CD8-positive, alpha-beta T cell (primary cell): ENCODE measurements at regions of chr18 and their contacts with region 1.

Region 1: DNA sequence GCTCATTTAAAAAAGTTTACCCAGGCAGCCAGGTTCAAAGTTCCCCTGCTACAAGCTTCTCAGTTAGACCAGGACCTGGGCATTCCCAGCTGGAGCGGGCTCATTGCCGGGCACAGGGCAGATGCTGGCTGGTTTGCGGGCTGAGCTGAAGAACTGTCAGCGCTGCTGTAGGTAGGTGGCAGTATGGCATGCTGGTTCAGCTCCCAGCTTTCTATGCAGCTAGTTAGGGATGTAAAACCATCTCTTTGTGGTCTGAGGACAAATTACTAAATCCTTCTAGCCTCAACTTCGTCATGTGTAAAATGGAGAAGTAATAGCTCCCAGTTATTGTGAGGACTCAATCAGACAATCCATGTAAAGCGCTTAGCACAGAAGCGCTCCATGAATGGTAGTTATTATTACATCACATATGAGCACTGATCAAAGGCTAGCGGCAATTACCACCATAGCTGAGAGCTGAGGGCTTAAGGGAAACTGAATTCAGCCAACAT is 2.4 kb upstream of the LDLRAD4 start:
- DNase-seq: peak in 8 of 9 experiments; percentile 24 to 76 (median 54)
- ATAC-seq: peak; percentile 47
- H3K4me3 ChIP-seq: peak overlapping the region in 1 of 2 experiments; percentile 39
- H3K4me3 Mint-ChIP-seq: peak overlapping the region; percentile 96
- H3K27ac ChIP-seq: no peak overlapping the region
- H3K27ac Mint-ChIP-seq: peak overlapping the region; percentile 93
- H3K4me1 ChIP-seq: peaks cover 26% of the 10 kb centered on the region
- H3K4me1 Mint-ChIP-seq: peaks cover 31% of the 10 kb centered on the region
- H3K27me3 ChIP-seq: peaks cover 0 to 5% of the 10 kb centered on the region in 2 experiments
- H3K27me3 Mint-ChIP-seq: peaks cover 20% of the 10 kb centered on the region
- CTCF ChIP-seq: peak; percentile 61

Region 2: DNA sequence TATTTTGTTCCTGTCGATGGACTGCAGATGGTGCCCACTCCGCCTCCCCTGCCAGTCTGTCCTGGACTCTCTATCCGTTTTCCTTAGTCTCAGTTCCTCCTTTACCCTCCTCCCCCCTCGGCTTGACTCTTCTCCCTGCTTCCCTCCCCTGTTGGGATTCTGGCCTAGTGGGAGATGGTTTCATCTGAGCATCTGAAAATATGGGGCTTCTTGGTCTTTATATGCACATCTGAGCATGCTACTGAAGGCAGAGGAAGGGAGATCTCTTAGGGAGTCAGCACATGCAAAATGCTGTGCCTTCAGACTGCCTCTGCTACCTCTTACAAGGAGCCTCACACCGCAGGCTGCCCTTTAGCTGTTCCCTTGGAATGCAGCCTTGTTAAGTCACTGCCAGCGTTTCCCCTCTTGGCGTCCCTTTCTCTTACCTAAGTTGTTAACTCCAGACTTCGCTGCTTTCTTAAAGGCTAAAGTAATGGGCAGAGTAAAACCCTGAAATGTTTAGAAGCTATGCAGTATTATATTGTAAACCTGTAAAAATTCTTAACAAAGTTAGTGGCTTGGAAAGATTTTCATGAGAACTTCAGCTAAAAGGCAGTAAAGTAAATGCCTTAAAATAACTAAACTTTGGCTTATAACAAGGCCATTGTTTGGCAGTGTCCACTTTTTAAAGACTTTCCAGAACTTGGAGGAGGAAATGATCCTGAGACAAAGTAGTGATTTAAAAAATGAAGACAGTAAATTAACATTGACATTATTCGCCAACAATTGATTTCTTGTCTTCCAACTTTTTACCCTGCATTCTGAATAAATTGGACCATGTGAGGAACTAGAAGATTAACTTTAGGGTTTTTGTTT is 52.2 kb after region 1 on chr18:
- CTCF ChIA-PET with region 1: interaction called, 3 read pairs
- POLR2A ChIA-PET with region 1: interaction called, 6 read pairs
- intact Hi-C with region 1: loop called in 1 of 2 experiments (anchors 5 kb)
- DNase-seq: peak in 1 of 9 experiments; percentile 32
- ATAC-seq: no peak
- H3K4me3 ChIP-seq: no peak overlapping the region
- H3K4me3 Mint-ChIP-seq: no peak overlapping the region
- H3K27ac ChIP-seq: no peak overlapping the region
- H3K27ac Mint-ChIP-seq: peak overlapping the region; percentile 64
- H3K4me1 ChIP-seq: peaks cover 43% of the 10 kb centered on the region
- H3K4me1 Mint-ChIP-seq: peaks cover 65% of the 10 kb centered on the region
- H3K27me3 ChIP-seq: no peaks in the 10 kb centered on the region
- H3K27me3 Mint-ChIP-seq: no peaks in the 10 kb centered on the region
- CTCF ChIP-seq: no peak

Region 3: DNA sequence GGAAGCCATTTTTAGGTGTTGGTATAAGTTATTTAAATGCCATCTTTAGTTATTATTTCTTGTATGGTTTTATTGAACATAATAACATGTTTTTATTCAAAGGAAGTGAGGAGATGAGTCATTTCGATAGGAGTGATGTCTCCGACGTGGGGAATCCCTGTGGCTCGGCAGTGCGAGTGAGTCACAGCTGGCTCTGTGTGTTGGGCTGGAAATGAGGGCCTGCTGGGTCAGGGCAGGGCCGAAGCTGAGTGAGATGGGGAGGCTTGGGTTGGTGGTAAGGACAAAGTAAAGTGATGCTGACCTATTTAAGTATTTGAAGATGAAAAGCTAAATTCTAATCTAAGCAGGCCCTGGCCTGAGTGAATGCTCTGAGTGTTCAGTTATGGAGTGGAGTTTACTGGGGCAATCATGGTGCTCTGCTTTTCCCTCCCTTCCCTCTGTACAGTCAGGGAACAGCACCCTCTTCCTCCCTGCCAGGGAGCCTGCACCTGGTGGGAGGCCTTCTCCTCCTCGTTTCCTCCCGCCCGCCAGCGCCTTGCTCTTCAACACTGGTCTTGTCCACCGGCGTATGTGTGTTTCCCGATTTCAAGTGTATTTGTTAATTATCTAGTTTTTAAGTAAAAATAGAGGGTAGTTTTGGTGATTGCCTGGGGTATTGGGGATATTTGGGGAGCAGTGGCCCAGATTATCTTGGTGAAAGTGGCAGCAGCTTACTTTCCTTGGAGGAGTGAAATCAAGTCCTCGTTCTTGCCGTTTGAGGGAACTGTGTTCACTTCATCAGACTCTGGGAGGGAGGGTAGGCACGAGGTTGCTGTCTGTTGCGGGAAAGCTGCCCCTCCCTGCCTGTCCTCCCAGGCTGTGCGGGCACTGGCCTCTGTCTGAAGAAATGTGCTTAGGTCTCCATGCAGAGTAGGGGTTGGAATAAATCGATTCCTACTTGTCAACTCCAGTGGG is 159.4 kb after region 1 on chr18:
- CTCF ChIA-PET with region 1: interaction called, 8 read pairs
- POLR2A ChIA-PET with region 1: interaction called, 5 read pairs
- intact Hi-C with region 1: loop called in 1 of 2 experiments (anchors 5 kb)
- DNase-seq: peak in 8 of 9 experiments; percentile 54 to 82 (median 68)
- ATAC-seq: peak; percentile 69
- H3K4me3 ChIP-seq: peak overlapping the region in 1 of 2 experiments; percentile 2
- H3K4me3 Mint-ChIP-seq: peak overlapping the region; percentile 64
- H3K27ac ChIP-seq: peak overlapping the region in 1 of 2 experiments; percentile 14
- H3K27ac Mint-ChIP-seq: peak overlapping the region; percentile 91
- H3K4me1 ChIP-seq: peaks cover 76% of the 10 kb centered on the region
- H3K4me1 Mint-ChIP-seq: peaks cover 71% of the 10 kb centered on the region
- H3K27me3 ChIP-seq: no peaks in the 10 kb centered on the region
- H3K27me3 Mint-ChIP-seq: no peaks in the 10 kb centered on the region
- CTCF ChIP-seq: no peak

Region 4: GRCh38 chr18:13435596-13436327 is 219.6 kb after region 1 on chr18:
- CTCF ChIA-PET with region 1: no interaction called
- POLR2A ChIA-PET with region 1: interaction called, 3 read pairs
- intact Hi-C with region 1: loop called in 1 of 2 experiments (anchors 1 kb)
- DNase-seq: no peak
- ATAC-seq: no peak
- H3K4me3 ChIP-seq: no peak overlapping the region
- H3K4me3 Mint-ChIP-seq: no peak overlapping the region
- H3K27ac ChIP-seq: no peak overlapping the region
- H3K27ac Mint-ChIP-seq: peak overlapping the region; percentile 67
- H3K4me1 ChIP-seq: peaks cover 39% of the 10 kb centered on the region
- H3K4me1 Mint-ChIP-seq: peaks cover 43% of the 10 kb centered on the region
- H3K27me3 ChIP-seq: no peaks in the 10 kb centered on the region
- H3K27me3 Mint-ChIP-seq: no peaks in the 10 kb centered on the region
- CTCF ChIP-seq: no peak

Region 5: GRCh38 chr18:13530879-13531387 is 314.8 kb after region 1 on chr18:
- CTCF ChIA-PET with region 1: interaction called, 18 read pairs
- POLR2A ChIA-PET with region 1: no interaction called
- intact Hi-C with region 1: loop called (anchors 1 to 5 kb)
- DNase-seq: peak in 3 of 9 experiments; percentile 18 to 55 (median 39)
- ATAC-seq: peak; percentile 23
- H3K4me3 ChIP-seq: no peak overlapping the region
- H3K4me3 Mint-ChIP-seq: no peak overlapping the region
- H3K27ac ChIP-seq: no peak overlapping the region
- H3K27ac Mint-ChIP-seq: peak overlapping the region; percentile 11
- H3K4me1 ChIP-seq: peaks cover 12% of the 10 kb centered on the region
- H3K4me1 Mint-ChIP-seq: peaks cover 54% of the 10 kb centered on the region
- H3K27me3 ChIP-seq: no peaks in the 10 kb centered on the region
- H3K27me3 Mint-ChIP-seq: no peaks in the 10 kb centered on the region
- CTCF ChIP-seq: no peak

Region 6: GRCh38 chr18:13558124-13558523 is 342.0 kb after region 1 on chr18:
- CTCF ChIA-PET with region 1: interaction called, 13 read pairs
- POLR2A ChIA-PET with region 1: no interaction called
- intact Hi-C with region 1: loop called in 1 of 2 experiments (anchors 1 kb)
- DNase-seq: peak in 7 of 9 experiments; percentile 18 to 60 (median 39)
- ATAC-seq: peak; percentile 54
- H3K4me3 ChIP-seq: no peak overlapping the region
- H3K4me3 Mint-ChIP-seq: no peak overlapping the region
- H3K27ac ChIP-seq: no peak overlapping the region
- H3K27ac Mint-ChIP-seq: no peak overlapping the region
- H3K4me1 ChIP-seq: peaks cover 7% of the 10 kb centered on the region
- H3K4me1 Mint-ChIP-seq: peaks cover 18% of the 10 kb centered on the region
- H3K27me3 ChIP-seq: no peaks in the 10 kb centered on the region
- H3K27me3 Mint-ChIP-seq: no peaks in the 10 kb centered on the region
- CTCF ChIP-seq: peak; percentile 68

Region 7: GRCh38 chr18:13629841-13630715 is 413.9 kb after region 1 on chr18:
- CTCF ChIA-PET with region 1: interaction called, 18 read pairs
- POLR2A ChIA-PET with region 1: no interaction called
- intact Hi-C with region 1: loop called (anchors 1 kb)
- DNase-seq: peak in 7 of 9 experiments; percentile 28 to 77 (median 62)
- ATAC-seq: peak; percentile 95
- H3K4me3 ChIP-seq: no peak overlapping the region
- H3K4me3 Mint-ChIP-seq: no peak overlapping the region
- H3K27ac ChIP-seq: no peak overlapping the region
- H3K27ac Mint-ChIP-seq: no peak overlapping the region
- H3K4me1 ChIP-seq: peaks cover 4% of the 10 kb centered on the region
- H3K4me1 Mint-ChIP-seq: peaks cover 22% of the 10 kb centered on the region
- H3K27me3 ChIP-seq: no peaks in the 10 kb centered on the region
- H3K27me3 Mint-ChIP-seq: no peaks in the 10 kb centered on the region
- CTCF ChIP-seq: peak; percentile 95